Dendritic cell treated with granulocyte-macrophage colony-stimulating factor and Interleukin-4, amounts not matched to agents 40 ng/mL and 50 ng/mL, for 4 days (primary cell): ENCODE measurements at regions of chr4 and their contacts with region 1.

Region 1: DNA sequence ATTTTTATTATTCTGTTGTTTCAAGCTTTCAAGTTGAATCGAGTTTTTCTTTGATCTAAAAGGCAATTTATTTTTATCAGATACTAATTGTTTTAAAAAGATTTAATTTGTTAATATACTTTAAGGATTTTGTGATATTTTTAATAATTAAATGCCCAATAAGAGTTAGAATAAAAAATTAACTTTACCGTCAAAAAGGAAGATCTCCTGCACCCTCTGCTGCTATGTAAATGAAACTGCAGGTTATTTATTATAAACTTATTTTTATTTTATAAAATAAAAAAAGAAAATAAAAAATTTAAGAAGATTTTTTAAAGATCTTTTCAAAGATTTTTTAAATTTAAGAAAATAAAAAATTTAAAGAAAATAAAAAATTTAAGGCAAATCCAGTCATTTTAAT is 166.1 kb downstream of the CCSER1 start:
- H3K4me3 Mint-ChIP-seq: no peak overlapping the region
- H3K27ac Mint-ChIP-seq: no peak overlapping the region
- H3K4me1 Mint-ChIP-seq: no peaks in the 10 kb centered on the region
- H3K27me3 Mint-ChIP-seq: no peaks in the 10 kb centered on the region

Region 2: GRCh38 chr4:89949782-89950387 is 343.4 kb before region 1 on chr4:
- intact Hi-C with region 1: loop called (anchors 1 kb)
- H3K4me3 Mint-ChIP-seq: no peak overlapping the region
- H3K27ac Mint-ChIP-seq: no peak overlapping the region
- H3K4me1 Mint-ChIP-seq: no peaks in the 10 kb centered on the region
- H3K27me3 Mint-ChIP-seq: no peaks in the 10 kb centered on the region

Region 3: GRCh38 chr4:90317785-90318184 is 24.5 kb after region 1 on chr4:
- intact Hi-C with region 1: no loop called
- H3K4me3 Mint-ChIP-seq: no peak overlapping the region
- H3K27ac Mint-ChIP-seq: no peak overlapping the region
- H3K4me1 Mint-ChIP-seq: no peaks in the 10 kb centered on the region
- H3K27me3 Mint-ChIP-seq: no peaks in the 10 kb centered on the region